ENCODE measurements at regions of chr22 and their contacts with region 1.

Region 1: DNA sequence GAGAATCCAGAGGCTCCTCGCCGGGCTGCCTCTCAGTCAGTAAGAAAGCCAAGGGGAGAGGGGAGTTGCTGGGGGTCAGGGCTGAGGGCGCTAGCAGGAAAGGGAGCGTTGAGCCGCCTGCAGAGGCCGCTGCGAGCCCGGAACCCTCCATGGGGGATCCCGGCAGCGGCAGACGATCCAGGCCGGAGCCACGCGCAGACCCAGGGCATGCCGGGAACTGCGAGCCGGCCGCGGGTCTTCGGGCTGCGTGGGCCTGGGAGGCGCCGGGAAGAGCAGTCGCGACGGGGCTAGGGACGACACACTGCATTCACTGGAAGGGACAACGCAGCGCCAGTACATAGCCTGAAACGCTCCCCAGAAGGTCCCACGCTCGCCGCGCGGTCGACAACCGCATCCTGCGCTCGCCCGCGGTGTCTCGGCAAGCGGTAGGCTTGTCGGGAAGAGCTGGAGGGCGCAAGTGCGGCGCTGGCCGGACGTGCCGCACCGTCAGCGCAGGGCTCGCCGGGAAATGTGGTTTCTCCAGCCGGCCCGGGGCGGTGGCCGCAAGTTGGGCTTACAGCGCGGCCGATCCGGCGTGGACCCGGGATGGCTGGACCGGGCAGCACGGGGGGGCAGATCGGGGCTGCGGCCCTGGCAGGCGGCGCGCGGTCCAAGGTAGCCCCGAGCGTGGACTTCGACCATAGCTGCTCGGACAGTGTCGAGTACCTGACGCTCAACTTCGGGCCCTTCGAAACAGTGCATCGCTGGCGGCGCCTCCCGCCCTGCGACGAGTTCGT is at the start of gene LZTR1:
- DNase-seq: peak; percentile 70
- ATAC-seq: peak; percentile 91
- H3K4me3 ChIP-seq: peak within 1 kb of the TSS; percentile 67 to 98 (median 83)
- H3K27ac ChIP-seq: peak within 1 kb of the TSS; percentile 80
- H3K4me1 ChIP-seq: peaks cover 39% of the 10 kb centered on the region
- H3K27me3 ChIP-seq: no peaks in the 10 kb centered on the region; a peak in 1 of 5 replicates
- CTCF ChIP-seq: peak; percentile 78
- EP300 ChIP-seq: peak in 1 of 2 experiments; percentile 13; a peak in 1 of 4 replicates
- POLR2A ChIP-seq: peak; percentile 96 to 98
- RAD21 ChIP-seq: peak; percentile 85
- total RNA-seq, gene LZTR1: 12.0 and 22.4 TPM in 2 replicates

Region 2: GRCh38 chr22:20951151-20951931 is 30.6 kb before region 1 on chr22:
- CTCF ChIA-PET with region 1: no interaction called
- POLR2A ChIA-PET with region 1: interaction called, 45 read pairs
- in situ Hi-C with region 1: no loop called
- intact Hi-C with region 1: no loop called
- DNase-seq: peak; percentile 89
- ATAC-seq: peak; percentile 66
- H3K4me3 ChIP-seq: peak overlapping the region in 2 of 3 experiments; percentile 29 to 46; a peak in 3 of 6 replicates
- H3K27ac ChIP-seq: peak overlapping the region; percentile 82
- H3K4me1 ChIP-seq: peaks cover 98% of the 10 kb centered on the region
- H3K27me3 ChIP-seq: no peaks in the 10 kb centered on the region
- CTCF ChIP-seq: no peak
- EP300 ChIP-seq: peak in 1 of 2 experiments; percentile 69; a peak in 2 of 4 replicates
- POLR2A ChIP-seq: peak; percentile 22 to 51; a peak in 2 of 4 replicates
- RAD21 ChIP-seq: no peak

Region 3: GRCh38 chr22:20957316-20958101 is 24.5 kb before region 1 on chr22:
- CTCF ChIA-PET with region 1: interaction called, 7 read pairs
- POLR2A ChIA-PET with region 1: interaction called, 45 read pairs
- in situ Hi-C with region 1: no loop called
- intact Hi-C with region 1: no loop called
- DNase-seq: no peak
- ATAC-seq: peak; percentile 65
- H3K4me3 ChIP-seq: peak overlapping the region; percentile 87 to 97 (median 95)
- H3K27ac ChIP-seq: peak overlapping the region; percentile 56
- H3K4me1 ChIP-seq: peaks cover 62% of the 10 kb centered on the region
- H3K27me3 ChIP-seq: no peaks in the 10 kb centered on the region; a peak in 1 of 5 replicates
- CTCF ChIP-seq: peak; percentile 19; the same call in 1 of the 2 replicates
- EP300 ChIP-seq: no peak
- POLR2A ChIP-seq: peak in 1 of 2 experiments; percentile 51; a peak in 2 of 4 replicates
- RAD21 ChIP-seq: peak; percentile 22; the same call in 1 of the 2 replicates

Region 4: DNA sequence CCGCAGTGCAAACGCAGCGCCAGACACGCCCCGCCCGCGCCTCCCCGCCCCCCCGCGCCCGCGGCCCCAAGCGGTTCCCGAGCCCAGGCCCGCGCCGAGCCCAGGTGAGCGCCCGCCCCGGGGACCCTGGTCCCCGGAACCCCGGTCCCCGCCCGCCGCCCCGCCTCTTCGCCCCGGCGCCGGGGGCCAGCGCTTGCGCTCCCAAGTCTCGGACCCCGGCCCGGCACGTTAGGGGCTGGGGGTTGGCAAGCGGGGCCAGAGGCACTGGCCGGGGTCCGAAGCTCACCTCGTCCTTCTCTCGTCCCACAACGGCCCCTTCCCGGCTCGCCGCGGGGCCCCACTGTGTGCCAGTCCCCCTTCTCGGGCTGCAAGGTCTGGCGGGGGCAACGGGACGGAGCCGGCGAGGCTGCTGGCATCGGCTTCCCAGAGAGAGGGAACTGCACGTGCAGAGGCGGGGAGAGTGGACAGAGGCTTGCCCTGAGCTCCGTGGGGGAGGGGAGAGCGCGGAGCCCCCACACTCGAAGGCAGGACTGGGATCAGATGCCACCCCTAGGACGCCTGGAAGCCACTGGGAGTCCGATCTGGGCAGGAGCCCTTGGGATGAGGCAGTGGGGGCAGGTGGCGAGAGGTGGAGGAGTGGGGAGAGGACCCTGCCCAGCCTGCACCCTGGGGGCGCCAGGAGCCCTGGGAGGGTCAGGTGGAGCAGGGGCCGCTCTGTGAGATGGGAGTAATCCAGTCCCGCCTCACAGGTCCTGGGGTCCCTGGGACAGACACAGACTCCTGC is 16.7 kb before region 1 on chr22:
- CTCF ChIA-PET with region 1: interaction called, 7 read pairs
- POLR2A ChIA-PET with region 1: interaction called, 33 read pairs
- in situ Hi-C with region 1: no loop called
- intact Hi-C with region 1: loop called (anchors 1 kb)
- DNase-seq: no peak
- ATAC-seq: peak; percentile 10
- H3K4me3 ChIP-seq: peak overlapping the region; percentile 60 to 72 (median 64)
- H3K27ac ChIP-seq: peak overlapping the region; percentile 50
- H3K4me1 ChIP-seq: peaks cover 56% of the 10 kb centered on the region
- H3K27me3 ChIP-seq: no peaks in the 10 kb centered on the region
- CTCF ChIP-seq: 0 out of 2 replicates have a peak, but pooled peaks have one; percentile 2
- EP300 ChIP-seq: no peak
- POLR2A ChIP-seq: no peak
- RAD21 ChIP-seq: no peak; the same call in 1 of the 2 replicates

Region 5: GRCh38 chr22:20970939-20971657 is 10.9 kb before region 1 on chr22:
- CTCF ChIA-PET with region 1: no interaction called
- POLR2A ChIA-PET with region 1: interaction called, 33 read pairs
- in situ Hi-C with region 1: no loop called
- intact Hi-C with region 1: loop called (anchors 1 kb)
- DNase-seq: no peak
- ATAC-seq: no peak
- H3K4me3 ChIP-seq: no peak overlapping the region
- H3K27ac ChIP-seq: no peak overlapping the region
- H3K4me1 ChIP-seq: peaks cover 22% of the 10 kb centered on the region
- H3K27me3 ChIP-seq: no peaks in the 10 kb centered on the region
- CTCF ChIP-seq: no peak
- EP300 ChIP-seq: no peak
- POLR2A ChIP-seq: no peak
- RAD21 ChIP-seq: no peak

Measured in HepG2 (cell line).